ENCODE measurements at regions of chr9 and their contacts with region 1.

Region 1: GRCh38 chr9:34376596-34377403 is at the start of gene MYORG:
- DNase-seq: peak; percentile 92 to 99 (median 95)
- ATAC-seq: peak; percentile 73
- H3K4me3 ChIP-seq: peak within 1 kb of the TSS; percentile 74
- H3K4me3 Mint-ChIP-seq: peak within 1 kb of the TSS; percentile 96
- H3K27ac ChIP-seq: peak within 1 kb of the TSS in 1 of 2 donors; percentile 36
- H3K27ac Mint-ChIP-seq: peak within 1 kb of the TSS; percentile 77
- H3K4me1 ChIP-seq: peaks cover 48% of the 10 kb centered on the region
- H3K4me1 Mint-ChIP-seq: peaks cover 47% of the 10 kb centered on the region
- H3K27me3 ChIP-seq: no peaks in the 10 kb centered on the region
- H3K27me3 Mint-ChIP-seq: no peaks in the 10 kb centered on the region
- CTCF ChIP-seq: no peak
- total RNA-seq, gene MYORG: 0.42 to 0.58 TPM

Region 2: DNA sequence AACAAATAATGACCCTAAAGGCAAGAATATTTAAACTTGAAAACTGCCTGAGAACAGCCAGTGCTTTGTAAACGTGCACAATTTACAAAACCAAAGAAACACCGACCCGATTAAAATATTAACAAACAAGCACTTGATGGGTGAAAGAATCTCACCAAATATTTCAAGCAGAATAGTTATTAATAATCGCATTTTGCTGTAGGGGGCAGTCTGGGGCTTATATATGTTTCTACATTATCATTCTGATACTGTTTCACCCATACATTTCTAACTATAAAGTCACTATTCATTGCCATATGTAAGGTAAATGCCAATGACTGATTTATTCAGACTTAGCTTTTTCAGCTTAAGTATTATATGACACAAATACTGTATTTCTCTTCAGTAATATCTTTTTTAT is 365.8 kb before region 1 on chr9:
- CTCF ChIA-PET with region 1: no interaction called
- POLR2A ChIA-PET with region 1: no interaction called
- intact Hi-C with region 1: loop called in 1 of 2 experiments (anchors 10 kb)
- DNase-seq: peak in 4 of 14 experiments; percentile 15 to 43 (median 40)
- ATAC-seq: peak; percentile 48
- H3K4me3 ChIP-seq: no peak overlapping the region
- H3K4me3 Mint-ChIP-seq: no peak overlapping the region
- H3K27ac ChIP-seq: no peak overlapping the region
- H3K27ac Mint-ChIP-seq: no peak overlapping the region
- H3K4me1 ChIP-seq: no peaks in the 10 kb centered on the region
- H3K4me1 Mint-ChIP-seq: no peaks in the 10 kb centered on the region
- H3K27me3 ChIP-seq: no peaks in the 10 kb centered on the region
- H3K27me3 Mint-ChIP-seq: no peaks in the 10 kb centered on the region
- CTCF ChIP-seq: peak; percentile 46

Region 3: GRCh38 chr9:34242830-34243229 is 134.0 kb before region 1 on chr9:
- CTCF ChIA-PET with region 1: no interaction called
- POLR2A ChIA-PET with region 1: no interaction called
- intact Hi-C with region 1: no loop called
- DNase-seq: no peak
- ATAC-seq: no peak
- H3K4me3 ChIP-seq: no peak overlapping the region
- H3K4me3 Mint-ChIP-seq: no peak overlapping the region
- H3K27ac ChIP-seq: no peak overlapping the region
- H3K27ac Mint-ChIP-seq: peak overlapping the region; percentile 17
- H3K4me1 ChIP-seq: no peaks in the 10 kb centered on the region
- H3K4me1 Mint-ChIP-seq: peaks cover 30% of the 10 kb centered on the region
- H3K27me3 ChIP-seq: no peaks in the 10 kb centered on the region
- H3K27me3 Mint-ChIP-seq: no peaks in the 10 kb centered on the region
- CTCF ChIP-seq: no peak

Region 4: GRCh38 chr9:34252670-34253459 is 123.9 kb before region 1 on chr9:
- CTCF ChIA-PET with region 1: interaction called, 3 read pairs
- POLR2A ChIA-PET with region 1: interaction called, 4 read pairs
- intact Hi-C with region 1: loop called (anchors 1 to 5 kb)
- DNase-seq: peak; percentile 36 to 81 (median 56)
- ATAC-seq: peak; percentile 75
- H3K4me3 ChIP-seq: no peak overlapping the region
- H3K4me3 Mint-ChIP-seq: no peak overlapping the region
- H3K27ac ChIP-seq: no peak overlapping the region
- H3K27ac Mint-ChIP-seq: peak overlapping the region; percentile 71
- H3K4me1 ChIP-seq: peaks cover 21% of the 10 kb centered on the region
- H3K4me1 Mint-ChIP-seq: peaks cover 25% of the 10 kb centered on the region
- H3K27me3 ChIP-seq: no peaks in the 10 kb centered on the region
- H3K27me3 Mint-ChIP-seq: no peaks in the 10 kb centered on the region
- CTCF ChIP-seq: peak; percentile 91

Region 5: GRCh38 chr9:34458013-34458958 is 81.5 kb after region 1 on chr9 and contains the starts of genes DNAI1 and FAM219A:
- CTCF ChIA-PET with region 1: interaction called, 3 read pairs
- POLR2A ChIA-PET with region 1: interaction called, 11 read pairs
- intact Hi-C with region 1: loop called (anchors 1 to 2 kb)
- DNase-seq: peak; percentile 97 to 100 (median 99)
- ATAC-seq: peak; percentile 96
- H3K4me3 ChIP-seq: peak within 1 kb of the TSS; percentile 72
- H3K4me3 Mint-ChIP-seq: peak within 1 kb of the TSS; percentile 98
- H3K27ac ChIP-seq: no peak within 1 kb of the TSS
- H3K27ac Mint-ChIP-seq: peak within 1 kb of the TSS; percentile 68
- H3K4me1 ChIP-seq: peaks cover 25% of the 10 kb centered on the region
- H3K4me1 Mint-ChIP-seq: peaks cover 31% of the 10 kb centered on the region
- H3K27me3 ChIP-seq: no peaks in the 10 kb centered on the region
- H3K27me3 Mint-ChIP-seq: peaks cover 9% of the 10 kb centered on the region
- CTCF ChIP-seq: no peak
- total RNA-seq, gene DNAI1: not detected
- total RNA-seq, gene FAM219A: 7.7 to 8.5 TPM

Region 6: GRCh38 chr9:35820076-35820475 is 1443.3 kb after region 1 on chr9:
- CTCF ChIA-PET with region 1: no interaction called
- POLR2A ChIA-PET with region 1: no interaction called
- intact Hi-C with region 1: loop called in 1 of 2 experiments (anchors 5 kb)
- DNase-seq: no peak
- ATAC-seq: no peak
- H3K4me3 ChIP-seq: no peak overlapping the region
- H3K4me3 Mint-ChIP-seq: no peak overlapping the region
- H3K27ac ChIP-seq: no peak overlapping the region
- H3K27ac Mint-ChIP-seq: no peak overlapping the region
- H3K4me1 ChIP-seq: peaks cover 2% of the 10 kb centered on the region
- H3K4me1 Mint-ChIP-seq: peaks cover 6% of the 10 kb centered on the region
- H3K27me3 ChIP-seq: no peaks in the 10 kb centered on the region
- H3K27me3 Mint-ChIP-seq: no peaks in the 10 kb centered on the region
- CTCF ChIP-seq: no peak